Caco-2 (cell line): ENCODE measurements at regions of chr1 and their contacts with region 1.

Region 1: DNA sequence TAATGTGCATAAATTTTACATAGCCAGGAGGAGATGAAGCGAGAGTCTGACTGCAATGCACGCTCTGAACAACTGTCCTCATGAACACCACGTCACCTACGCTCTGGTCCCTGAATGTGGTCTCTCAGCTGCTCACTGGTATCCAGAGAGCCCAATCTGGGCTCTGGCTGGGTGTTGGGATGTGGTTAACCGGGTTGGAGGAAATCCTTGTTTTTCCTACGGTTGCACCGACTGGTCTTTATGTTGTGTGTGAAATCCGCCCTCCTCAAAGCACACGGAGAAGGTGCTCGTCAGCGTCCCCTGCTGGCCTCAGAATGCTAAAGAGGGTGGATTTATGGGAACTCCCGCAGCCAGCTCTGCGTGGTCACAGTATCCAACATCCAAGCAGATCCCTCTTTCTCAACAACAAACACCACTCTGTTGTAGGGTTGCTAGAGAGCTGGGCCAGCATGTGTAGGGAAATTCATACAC is 51.8 kb upstream of the FAM89A start:
- DNase-seq: peak; percentile 45 to 51
- H3K4me3 ChIP-seq: no peak overlapping the region
- H3K4me3 Mint-ChIP-seq: no peak overlapping the region
- H3K27ac Mint-ChIP-seq: no peak overlapping the region
- H3K4me1 ChIP-seq: no peaks in the 10 kb centered on the region
- H3K4me1 Mint-ChIP-seq: no peaks in the 10 kb centered on the region
- H3K27me3 ChIP-seq: no peaks in the 10 kb centered on the region
- H3K27me3 Mint-ChIP-seq: no peaks in the 10 kb centered on the region
- CTCF ChIP-seq: peak; percentile 66 to 76

Region 2: DNA sequence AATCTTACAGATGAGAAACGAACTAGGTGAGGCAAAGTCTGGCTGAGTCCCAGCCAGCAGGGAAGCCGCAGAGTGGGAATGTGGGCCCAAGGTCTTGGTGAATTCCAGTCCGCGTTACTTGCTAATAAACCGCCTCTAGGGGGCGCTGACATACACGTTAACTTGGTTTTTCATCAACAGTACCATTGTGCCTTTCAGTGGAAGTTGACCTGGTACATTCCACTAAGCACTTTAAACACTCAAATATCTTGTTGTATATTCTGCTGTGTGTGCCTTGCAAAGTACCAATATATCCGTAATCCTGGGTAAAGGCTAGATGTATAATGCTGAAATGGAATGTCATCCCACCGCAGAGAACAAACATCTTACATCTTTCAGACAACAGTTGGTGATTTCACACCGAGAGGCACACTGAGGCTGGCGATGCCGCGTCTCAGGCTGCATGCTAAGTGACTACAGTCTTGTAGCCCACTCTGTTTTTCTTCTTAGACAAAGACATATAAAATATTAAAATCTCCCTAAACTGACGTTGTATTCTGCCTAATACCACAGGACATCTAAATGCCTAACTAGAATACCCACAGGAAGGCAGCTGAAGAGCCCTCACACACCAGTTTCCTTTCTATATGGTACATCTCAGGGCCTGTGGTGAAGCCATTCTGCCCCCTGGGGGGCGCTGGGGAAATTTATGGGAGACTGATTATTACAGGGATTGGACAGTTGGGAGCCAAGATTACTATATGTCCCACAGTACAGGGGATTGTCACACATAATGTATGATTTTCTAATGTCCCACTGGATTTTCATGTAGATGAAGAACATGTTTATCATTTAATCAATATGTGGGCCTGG is 174.4 kb before region 1 on chr1:
- CTCF ChIA-PET with region 1: no interaction called
- POLR2A ChIA-PET with region 1: no interaction called
- intact Hi-C with region 1: loop called (anchors 2 kb)
- DNase-seq: peak; percentile 84
- H3K4me3 ChIP-seq: no peak overlapping the region
- H3K4me3 Mint-ChIP-seq: no peak overlapping the region
- H3K27ac Mint-ChIP-seq: no peak overlapping the region
- H3K4me1 ChIP-seq: peaks cover 25% of the 10 kb centered on the region
- H3K4me1 Mint-ChIP-seq: peaks cover 33% of the 10 kb centered on the region
- H3K27me3 ChIP-seq: no peaks in the 10 kb centered on the region
- H3K27me3 Mint-ChIP-seq: no peaks in the 10 kb centered on the region
- CTCF ChIP-seq: peak; percentile 69 to 70

Region 3: DNA sequence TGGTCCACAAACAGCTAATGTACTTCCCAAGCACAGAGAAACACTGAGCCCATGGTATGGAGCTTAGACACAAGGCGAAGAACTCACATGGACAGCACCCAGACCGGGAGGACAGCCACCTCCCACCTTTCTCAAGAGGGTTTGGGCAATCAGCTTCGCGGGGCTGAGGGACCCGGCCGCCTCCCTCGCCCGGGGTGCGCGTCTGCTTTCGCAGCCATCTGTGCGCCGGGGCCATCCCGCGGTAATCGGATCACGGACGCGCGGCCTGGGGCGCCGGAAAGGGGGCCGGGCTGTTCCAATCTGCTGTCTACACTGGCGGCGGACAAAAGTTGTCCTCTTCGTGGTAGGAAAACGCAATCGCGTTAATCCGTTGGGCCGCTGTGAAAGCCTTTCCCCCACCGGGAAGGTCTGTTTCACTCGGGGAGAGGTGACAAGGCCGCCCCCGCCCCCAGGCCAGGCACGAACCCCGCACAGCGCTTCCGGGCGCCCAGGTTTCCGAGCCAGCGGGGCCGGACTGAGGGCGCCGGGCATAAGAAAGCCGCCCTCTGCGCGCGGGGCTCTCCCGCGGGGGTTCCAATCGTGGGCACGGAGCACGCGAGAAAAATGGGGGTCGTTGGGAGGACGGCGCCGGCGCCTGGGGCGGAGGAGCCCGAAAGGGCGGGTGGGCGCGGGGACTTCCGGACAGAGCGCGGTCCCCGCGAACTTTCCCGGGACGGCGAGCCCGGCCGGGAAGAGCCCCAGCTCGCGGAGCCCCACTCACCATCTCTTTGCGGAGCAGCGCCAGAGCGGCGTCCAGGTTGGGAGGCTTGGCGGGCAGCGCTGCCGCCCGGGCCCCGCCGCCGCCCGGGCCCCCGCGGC is 52.5 kb before region 1 on chr1:
- CTCF ChIA-PET with region 1: interaction called, 9 read pairs
- POLR2A ChIA-PET with region 1: interaction called, 3 read pairs
- intact Hi-C with region 1: loop called (anchors 2 kb)
- DNase-seq: peak; percentile 51 to 64
- H3K4me3 ChIP-seq: peak overlapping the region; percentile 78
- H3K4me3 Mint-ChIP-seq: peak overlapping the region; percentile 81
- H3K27ac Mint-ChIP-seq: peak overlapping the region; percentile 55
- H3K4me1 ChIP-seq: peaks cover 26% of the 10 kb centered on the region
- H3K4me1 Mint-ChIP-seq: peaks cover 35% of the 10 kb centered on the region
- H3K27me3 ChIP-seq: no peaks in the 10 kb centered on the region
- H3K27me3 Mint-ChIP-seq: no peaks in the 10 kb centered on the region
- CTCF ChIP-seq: no peak

Region 4: GRCh38 chr1:231116738-231117137 is 24.9 kb after region 1 on chr1:
- CTCF ChIA-PET with region 1: no interaction called
- POLR2A ChIA-PET with region 1: no interaction called
- intact Hi-C with region 1: loop called (anchors 1 kb)
- DNase-seq: no peak
- H3K4me3 ChIP-seq: no peak overlapping the region
- H3K4me3 Mint-ChIP-seq: no peak overlapping the region
- H3K27ac Mint-ChIP-seq: no peak overlapping the region
- H3K4me1 ChIP-seq: no peaks in the 10 kb centered on the region; the same call in 1 of the 2 replicates
- H3K4me1 Mint-ChIP-seq: no peaks in the 10 kb centered on the region
- H3K27me3 ChIP-seq: no peaks in the 10 kb centered on the region; the same call in 1 of the 2 replicates
- H3K27me3 Mint-ChIP-seq: peaks cover 6% of the 10 kb centered on the region
- CTCF ChIP-seq: no peak

Region 5: DNA sequence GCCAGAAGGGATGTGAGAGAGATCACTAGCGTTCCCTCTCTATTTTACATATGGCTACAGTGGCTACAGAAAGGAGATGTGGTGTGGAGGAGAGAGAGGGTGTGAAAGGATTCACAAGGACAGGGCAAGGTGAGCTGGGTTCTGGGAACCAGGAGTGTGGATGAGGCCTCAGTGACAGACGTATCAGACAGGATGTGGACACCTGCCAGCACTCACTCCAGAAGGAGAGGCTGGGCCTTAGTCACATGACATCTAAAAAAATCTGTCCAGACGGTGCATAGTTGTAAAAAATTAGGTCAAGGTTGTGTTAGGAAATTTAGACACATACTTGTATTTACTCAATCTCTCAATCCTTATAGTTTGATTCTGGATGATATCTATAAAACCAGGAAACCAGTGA is 80.5 kb after region 1 on chr1:
- CTCF ChIA-PET with region 1: no interaction called
- POLR2A ChIA-PET with region 1: no interaction called
- intact Hi-C with region 1: no loop called
- DNase-seq: no peak
- H3K4me3 ChIP-seq: no peak overlapping the region
- H3K4me3 Mint-ChIP-seq: no peak overlapping the region
- H3K27ac Mint-ChIP-seq: no peak overlapping the region
- H3K4me1 ChIP-seq: no peaks in the 10 kb centered on the region
- H3K4me1 Mint-ChIP-seq: peaks cover 6% of the 10 kb centered on the region
- H3K27me3 ChIP-seq: no peaks in the 10 kb centered on the region
- H3K27me3 Mint-ChIP-seq: peaks cover 6% of the 10 kb centered on the region
- CTCF ChIP-seq: no peak